CD4-positive, alpha-beta memory T cell (primary cell): ENCODE measurements at regions of chr17 and their contacts with region 1.

Region 1: DNA sequence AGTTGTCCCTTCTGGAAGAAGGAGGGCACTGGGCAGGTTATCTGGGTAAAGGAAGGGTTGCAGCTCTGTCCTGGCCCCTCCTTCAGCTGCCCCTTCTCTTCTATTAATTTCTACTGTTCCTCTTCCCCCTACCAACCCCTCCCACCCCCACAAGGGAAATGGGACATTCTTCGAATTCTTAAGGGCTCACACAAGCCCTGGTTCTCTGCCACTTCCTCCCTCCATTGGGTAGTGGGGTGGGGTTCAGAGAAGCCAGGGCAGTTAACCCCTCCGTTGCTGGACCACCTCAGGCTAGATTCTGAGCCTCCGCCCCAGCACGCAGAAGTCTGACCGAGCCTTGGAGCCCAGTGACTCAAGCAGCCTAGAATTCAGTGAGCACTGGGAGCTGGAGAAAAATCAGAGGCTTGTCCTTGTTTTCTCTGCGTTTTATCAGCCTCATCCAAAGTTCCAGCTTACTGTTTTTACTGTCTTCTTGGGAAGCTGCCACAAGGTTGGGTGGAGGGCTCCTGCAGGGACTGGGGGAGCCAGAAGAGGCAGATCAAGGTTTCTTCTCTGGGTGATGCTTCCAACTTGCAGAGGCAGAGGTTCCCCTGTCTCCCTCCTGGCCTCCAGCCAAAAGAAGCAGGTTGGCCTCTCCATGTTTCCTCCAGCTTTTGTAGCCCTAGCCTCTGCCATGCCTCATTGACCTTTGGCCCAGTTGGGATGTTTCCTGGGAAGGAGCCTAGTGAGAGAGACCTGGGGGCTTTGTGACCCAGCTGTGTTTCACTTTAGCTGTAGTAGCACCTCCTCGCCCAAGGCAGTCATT is 10.2 kb downstream of the LASP1 start:
- DNase-seq: no peak
- H3K4me3 ChIP-seq: no peak overlapping the region
- H3K4me3 Mint-ChIP-seq: peak overlapping the region in 7 of 8 donors; percentile 59 to 77 (median 69)
- H3K27ac ChIP-seq: peak overlapping the region; percentile 31
- H3K27ac Mint-ChIP-seq: peak overlapping the region; percentile 33 to 90 (median 83)
- H3K4me1 ChIP-seq: peaks cover 92% of the 10 kb centered on the region
- H3K4me1 Mint-ChIP-seq: peaks cover 59 to 95% (median 75%) of the 10 kb centered on the region in 4 donors
- H3K27me3 ChIP-seq: no peaks in the 10 kb centered on the region
- H3K27me3 Mint-ChIP-seq: no peaks in the 10 kb centered on the region

Region 2: DNA sequence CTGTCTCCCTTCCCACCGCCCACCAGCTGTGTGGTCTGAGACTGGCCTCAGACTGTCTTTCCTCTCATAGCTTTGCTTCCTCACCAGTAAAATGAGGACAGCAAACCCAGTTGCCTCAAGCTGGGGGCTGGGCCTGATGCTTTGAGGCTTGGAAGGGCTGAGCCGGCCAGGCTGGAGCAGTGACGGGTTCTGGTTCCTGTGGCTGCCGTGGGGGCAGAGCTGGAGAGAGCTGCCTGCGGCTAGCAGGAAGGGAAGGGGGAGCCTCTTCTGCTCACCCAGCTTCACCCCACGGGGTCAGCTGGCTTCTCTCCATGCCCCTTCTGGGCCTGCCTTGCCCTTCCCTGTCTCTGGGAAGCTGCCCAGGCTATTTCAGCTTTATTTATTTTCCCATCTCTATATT is 13.5 kb after region 1 on chr17:
- CTCF ChIA-PET with region 1: interaction called, 5 read pairs
- POLR2A ChIA-PET with region 1: interaction called, 133 read pairs
- intact Hi-C with region 1: loop called (anchors 2 kb)
- DNase-seq: peak in 1 of 5 donors; percentile 50
- H3K4me3 ChIP-seq: no peak overlapping the region
- H3K4me3 Mint-ChIP-seq: peak overlapping the region in 5 of 8 donors; percentile 12 to 59 (median 23)
- H3K27ac ChIP-seq: peak overlapping the region; percentile 50
- H3K27ac Mint-ChIP-seq: peak overlapping the region; percentile 66 to 90 (median 78)
- H3K4me1 ChIP-seq: peaks cover 95% of the 10 kb centered on the region
- H3K4me1 Mint-ChIP-seq: peaks cover 57 to 96% (median 77%) of the 10 kb centered on the region in 4 donors
- H3K27me3 ChIP-seq: no peaks in the 10 kb centered on the region
- H3K27me3 Mint-ChIP-seq: no peaks in the 10 kb centered on the region

Region 3: DNA sequence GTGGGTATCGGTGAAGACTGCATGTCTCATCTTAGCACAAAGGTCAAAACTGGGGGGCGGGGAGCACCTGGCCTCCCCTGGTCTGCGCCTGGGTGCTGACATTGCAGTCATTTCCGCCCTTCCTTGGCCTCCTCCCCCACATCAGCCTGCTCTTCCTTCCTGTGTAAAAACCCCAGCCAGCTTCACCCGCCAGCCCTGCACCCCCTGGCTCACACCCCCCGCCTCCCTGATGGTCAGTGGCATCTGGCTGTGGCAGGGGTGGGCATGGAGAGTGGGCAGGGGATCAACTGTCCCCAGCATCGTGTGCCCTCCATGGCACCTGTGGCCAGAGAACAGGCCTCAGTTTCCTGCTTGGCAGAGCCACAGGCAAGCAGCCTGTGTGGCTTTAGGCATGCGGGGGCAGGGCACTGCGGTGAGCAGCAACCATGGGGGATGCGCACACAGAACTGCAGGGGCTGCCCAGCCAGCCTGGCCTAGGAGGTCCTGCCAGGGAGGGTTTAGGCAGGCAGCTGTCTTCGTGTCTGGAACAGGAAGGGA is 18.8 kb after region 1 on chr17:
- CTCF ChIA-PET with region 1: interaction called, 5 read pairs
- POLR2A ChIA-PET with region 1: interaction called, 133 read pairs
- intact Hi-C with region 1: loop called (anchors 2 kb)
- DNase-seq: peak; percentile 71 to 93 (median 79)
- H3K4me3 ChIP-seq: peak overlapping the region; percentile 36 to 57
- H3K4me3 Mint-ChIP-seq: peak overlapping the region; percentile 66 to 93 (median 88)
- H3K27ac ChIP-seq: peak overlapping the region; percentile 85
- H3K27ac Mint-ChIP-seq: peak overlapping the region; percentile 90 to 98 (median 97)
- H3K4me1 ChIP-seq: peaks cover 88% of the 10 kb centered on the region
- H3K4me1 Mint-ChIP-seq: peaks cover 40 to 79% (median 62%) of the 10 kb centered on the region in 4 donors
- H3K27me3 ChIP-seq: no peaks in the 10 kb centered on the region
- H3K27me3 Mint-ChIP-seq: no peaks in the 10 kb centered on the region